Left ventricle myocardium superior (tissue), 1 donor: ENCODE measurements at regions of chr10 and their contacts with region 1.

Region 1: GRCh38 chr10:97025613-97026242 is 160.0 kb downstream of the SLIT1 start:
- DNase-seq: no peak
- ATAC-seq: peak; percentile 29

Region 2: DNA sequence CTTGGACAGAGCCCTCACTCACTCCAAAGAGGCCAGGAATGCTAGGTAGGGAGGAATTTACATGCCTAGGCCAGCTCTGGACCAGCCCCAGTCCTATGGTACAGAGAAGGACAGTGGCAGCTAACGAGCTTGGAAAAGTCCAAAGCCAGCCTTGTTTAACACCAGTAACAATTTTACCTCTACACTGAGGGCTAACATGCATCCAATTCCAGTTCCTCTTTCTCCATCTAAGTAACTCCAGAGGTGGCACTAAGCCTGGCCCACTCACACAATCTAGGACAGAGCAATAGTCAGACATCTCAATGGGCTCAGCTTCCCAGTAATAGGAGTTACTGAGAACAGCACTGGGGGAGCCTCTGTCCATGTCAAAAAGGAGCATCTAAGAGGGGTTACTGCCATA is 199.3 kb before region 1 on chr10:
- intact Hi-C with region 1: loop called (anchors 10 kb)
- DNase-seq: no peak
- ATAC-seq: no peak

Region 3: DNA sequence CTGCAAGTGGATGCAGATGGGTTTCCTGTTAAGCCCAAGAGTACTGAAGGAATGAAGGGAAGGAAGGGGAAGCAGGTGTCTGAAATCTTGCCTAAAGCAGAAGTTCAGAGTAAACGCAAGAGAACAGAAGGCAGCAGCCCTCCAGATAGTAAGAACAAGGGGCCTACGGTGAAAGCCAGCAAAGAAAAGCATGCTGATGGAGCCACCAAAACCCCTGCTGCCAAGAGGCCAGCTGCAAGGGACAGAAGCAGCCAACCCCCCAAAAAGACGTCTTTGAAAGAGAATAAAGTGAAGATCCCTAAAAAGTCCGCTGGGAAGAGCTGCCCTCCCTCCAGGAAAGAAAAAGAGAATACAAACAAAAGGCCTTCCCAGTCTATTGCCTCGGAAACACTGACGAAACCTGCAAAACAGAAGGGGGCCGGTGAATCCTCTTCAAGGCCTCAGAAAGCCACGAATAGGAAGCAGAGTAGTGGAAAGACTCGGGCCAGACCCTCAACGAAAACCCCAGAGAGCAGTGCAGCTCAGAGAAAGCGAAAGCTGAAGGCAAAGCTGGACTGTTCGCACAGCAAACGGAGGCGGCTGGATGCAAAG is 41.1 kb before region 1 on chr10:
- intact Hi-C with region 1: no loop called
- DNase-seq: no peak
- ATAC-seq: no peak